A549 (cell line): ENCODE measurements at regions of chr20 and their contacts with region 1.

Region 1: GRCh38 chr20:56392282-56393137 is at the start of gene CSTF1:
- DNase-seq: peak; percentile 100
- ATAC-seq: peak; percentile 98 to 99
- H3K4me3 ChIP-seq: peak within 1 kb of the TSS; percentile 85
- H3K27ac ChIP-seq: peak within 1 kb of the TSS; percentile 85 to 96
- H3K4me1 ChIP-seq: peaks cover 24% of the 10 kb centered on the region
- CTCF ChIP-seq: no peak
- EP300 ChIP-seq: peak in 1 of 2 experiments; percentile 35; a peak in 1 of 5 replicates
- POLR2A ChIP-seq: peak; percentile 76
- RAD21 ChIP-seq: no peak
- polyA plus RNA-seq, gene CSTF1: 79.9 and 96.3 TPM in 2 replicates

Region 2: DNA sequence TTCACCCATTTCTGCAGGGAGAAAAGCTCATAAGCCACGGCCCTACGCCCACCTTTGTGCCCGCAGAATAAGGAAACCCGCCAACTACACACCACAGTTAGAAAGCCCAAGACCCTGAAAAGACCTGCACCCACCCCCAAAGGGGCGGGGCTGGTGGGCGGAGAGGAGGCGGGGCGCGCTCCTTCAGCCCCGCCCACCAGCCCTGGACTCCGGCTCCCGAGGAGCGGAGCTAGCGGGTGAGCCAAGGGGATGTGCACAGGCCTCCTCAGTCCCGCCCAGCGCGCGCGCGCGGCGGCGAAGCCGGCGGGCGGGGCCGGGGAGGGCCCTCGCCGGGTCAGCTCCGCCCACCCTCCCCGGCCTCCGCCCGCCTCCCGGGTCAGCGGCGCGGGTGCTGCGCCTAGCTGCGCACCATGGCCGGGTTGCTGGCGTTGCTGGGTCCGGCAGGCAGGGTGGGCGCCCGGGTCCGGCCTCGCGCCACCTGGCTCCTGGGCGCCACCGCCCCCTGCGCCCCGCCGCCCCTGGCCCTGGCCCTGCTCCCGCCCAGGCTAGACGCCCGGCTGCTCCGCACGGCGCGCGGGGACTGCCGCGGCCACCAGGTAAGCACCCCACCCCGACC is 33.8 kb before region 1 on chr20 and contains the start of gene FAM210B:
- CTCF ChIA-PET with region 1: interaction called, 5 read pairs
- POLR2A ChIA-PET with region 1: interaction called, 16 read pairs
- DNase-seq: peak; percentile 83 to 86
- ATAC-seq: peak; percentile 94 to 98
- H3K4me3 ChIP-seq: peak within 1 kb of the TSS; percentile 80
- H3K27ac ChIP-seq: peak within 1 kb of the TSS; percentile 75 to 93
- H3K4me1 ChIP-seq: no peaks in the 10 kb centered on the region
- CTCF ChIP-seq: no peak
- EP300 ChIP-seq: no peak
- POLR2A ChIP-seq: peak; percentile 65
- RAD21 ChIP-seq: no peak
- polyA plus RNA-seq, gene FAM210B: 12.9 and 13.1 TPM in 2 replicates